ENCODE measurements at regions of chr3 and their contacts with region 1.

Region 1: DNA sequence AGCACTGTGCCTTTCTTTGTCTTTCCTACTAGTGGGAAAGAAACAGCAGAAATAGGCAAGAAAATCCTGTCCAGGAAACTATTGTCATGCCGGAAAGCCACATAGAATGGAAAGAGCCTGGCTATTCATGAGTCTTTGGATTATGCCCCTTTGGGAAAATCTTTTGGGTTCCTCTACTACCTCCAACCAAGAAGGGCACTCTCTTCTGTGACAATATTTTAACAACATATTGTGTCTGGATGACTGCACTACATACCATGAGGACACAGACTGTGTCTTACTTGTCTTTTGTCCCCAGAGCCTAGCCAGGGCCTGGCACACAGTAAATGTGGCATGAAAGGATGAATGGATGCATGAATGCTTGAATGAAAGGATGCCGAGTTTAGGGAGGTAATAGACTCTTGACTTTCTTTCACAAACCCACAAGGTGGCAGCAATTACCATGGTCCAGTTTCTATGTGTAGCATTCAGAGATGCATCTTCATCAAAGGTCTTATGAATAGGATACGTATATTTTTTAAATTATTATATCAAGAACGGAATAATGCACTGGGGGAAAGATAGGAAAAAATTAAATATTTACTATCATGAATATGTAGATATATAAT is 30.3 kb downstream of the ARL14 start:
- DNase-seq: peak in 1 of 2 donors; percentile 24
- ATAC-seq: peak; percentile 88 to 97
- H3K4me3 ChIP-seq: no peak overlapping the region
- H3K27ac ChIP-seq: no peak overlapping the region
- H3K4me1 ChIP-seq: no peaks in the 10 kb centered on the region
- H3K27me3 ChIP-seq: no peaks in the 10 kb centered on the region
- CTCF ChIP-seq: peak; percentile 52 to 70 (median 60)
- POLR2A ChIP-seq: no peak

Region 2: GRCh38 chr3:160929595-160929994 is 222.3 kb after region 1 on chr3:
- in situ Hi-C with region 1: loop called in 2 of 4 experiments (anchors 10 kb)
- intact Hi-C with region 1: no loop called
- DNase-seq: peak; percentile 32 to 43
- ATAC-seq: peak; percentile 59 to 68
- H3K4me3 ChIP-seq: no peak overlapping the region
- H3K27ac ChIP-seq: no peak overlapping the region
- H3K4me1 ChIP-seq: peaks cover 17 to 50% of the 10 kb centered on the region in 2 donors
- H3K27me3 ChIP-seq: no peaks in the 10 kb centered on the region
- CTCF ChIP-seq: peak in 4 of 5 experiments; percentile 20 to 48 (median 36)
- POLR2A ChIP-seq: no peak

Region 3: GRCh38 chr3:160935413-160936095 is 228.3 kb after region 1 on chr3:
- in situ Hi-C with region 1: loop called (anchors 5 to 10 kb)
- intact Hi-C with region 1: no loop called
- DNase-seq: no peak
- ATAC-seq: no peak
- H3K4me3 ChIP-seq: no peak overlapping the region
- H3K27ac ChIP-seq: no peak overlapping the region
- H3K4me1 ChIP-seq: peaks cover 0 to 8% of the 10 kb centered on the region in 2 donors
- H3K27me3 ChIP-seq: no peaks in the 10 kb centered on the region
- CTCF ChIP-seq: no peak
- POLR2A ChIP-seq: no peak

Region 4: DNA sequence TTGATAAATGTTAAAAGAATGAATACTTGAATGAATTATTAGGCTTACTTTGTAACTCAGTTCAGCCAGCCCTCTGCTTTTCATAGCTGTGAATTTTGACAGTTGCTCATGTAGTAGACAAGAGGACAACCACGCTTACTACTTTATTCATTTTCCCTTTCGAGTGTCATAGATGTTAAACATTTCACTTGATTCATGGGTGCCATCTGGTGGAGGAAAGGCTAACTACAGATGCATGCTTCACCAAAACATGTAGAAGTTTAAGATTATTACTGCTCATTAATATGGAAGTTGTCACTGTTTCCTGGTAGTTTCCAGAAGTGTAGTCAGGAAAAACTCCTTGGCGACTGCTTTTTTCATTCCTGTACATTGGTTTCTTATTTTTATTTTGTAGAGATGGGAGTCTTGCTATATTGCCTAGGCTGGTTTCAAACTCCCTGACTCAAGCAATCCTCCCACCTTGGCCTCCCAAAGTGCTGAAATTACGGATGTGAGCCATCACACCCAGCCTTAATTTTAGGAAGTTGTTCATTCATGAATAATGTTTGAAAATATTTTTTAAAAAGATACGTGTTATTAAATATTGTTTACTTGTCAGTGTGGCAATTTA is 234.7 kb after region 1 on chr3:
- in situ Hi-C with region 1: loop called (anchors 5 to 10 kb)
- intact Hi-C with region 1: loop called (anchors 1 kb)
- DNase-seq: peak; percentile 35 to 53
- ATAC-seq: peak; percentile 85 to 90
- H3K4me3 ChIP-seq: no peak overlapping the region
- H3K27ac ChIP-seq: peak overlapping the region in 1 of 4 donors; percentile 15
- H3K4me1 ChIP-seq: peaks cover 4 to 7% of the 10 kb centered on the region in 2 donors
- H3K27me3 ChIP-seq: no peaks in the 10 kb centered on the region
- CTCF ChIP-seq: peak; percentile 84 to 91 (median 86)
- POLR2A ChIP-seq: no peak

Region 5: DNA sequence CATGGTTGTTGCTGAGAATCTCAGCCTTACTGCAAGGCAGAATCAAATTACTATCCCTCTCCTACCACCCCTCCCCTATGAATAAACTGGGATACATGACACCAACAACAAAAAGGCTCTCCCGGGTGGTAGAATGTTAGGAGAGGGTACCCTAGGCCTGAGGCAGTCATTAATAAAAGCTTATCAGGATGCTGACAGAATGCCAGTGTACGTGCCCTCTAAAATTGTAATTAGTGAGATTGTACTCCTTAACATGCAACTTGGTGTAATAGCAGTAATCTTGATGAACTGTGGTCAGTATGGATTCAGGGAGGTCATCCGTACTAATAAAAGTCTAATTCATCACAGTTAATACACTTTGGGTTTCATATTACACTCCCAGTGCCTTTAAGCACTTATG is 321.3 kb after region 1 on chr3:
- in situ Hi-C with region 1: no loop called
- intact Hi-C with region 1: no loop called
- DNase-seq: no peak
- ATAC-seq: no peak
- H3K4me3 ChIP-seq: no peak overlapping the region
- H3K27ac ChIP-seq: no peak overlapping the region
- H3K4me1 ChIP-seq: peaks cover 10 to 15% of the 10 kb centered on the region in 2 donors
- H3K27me3 ChIP-seq: no peaks in the 10 kb centered on the region
- CTCF ChIP-seq: no peak
- POLR2A ChIP-seq: no peak

Region 6: DNA sequence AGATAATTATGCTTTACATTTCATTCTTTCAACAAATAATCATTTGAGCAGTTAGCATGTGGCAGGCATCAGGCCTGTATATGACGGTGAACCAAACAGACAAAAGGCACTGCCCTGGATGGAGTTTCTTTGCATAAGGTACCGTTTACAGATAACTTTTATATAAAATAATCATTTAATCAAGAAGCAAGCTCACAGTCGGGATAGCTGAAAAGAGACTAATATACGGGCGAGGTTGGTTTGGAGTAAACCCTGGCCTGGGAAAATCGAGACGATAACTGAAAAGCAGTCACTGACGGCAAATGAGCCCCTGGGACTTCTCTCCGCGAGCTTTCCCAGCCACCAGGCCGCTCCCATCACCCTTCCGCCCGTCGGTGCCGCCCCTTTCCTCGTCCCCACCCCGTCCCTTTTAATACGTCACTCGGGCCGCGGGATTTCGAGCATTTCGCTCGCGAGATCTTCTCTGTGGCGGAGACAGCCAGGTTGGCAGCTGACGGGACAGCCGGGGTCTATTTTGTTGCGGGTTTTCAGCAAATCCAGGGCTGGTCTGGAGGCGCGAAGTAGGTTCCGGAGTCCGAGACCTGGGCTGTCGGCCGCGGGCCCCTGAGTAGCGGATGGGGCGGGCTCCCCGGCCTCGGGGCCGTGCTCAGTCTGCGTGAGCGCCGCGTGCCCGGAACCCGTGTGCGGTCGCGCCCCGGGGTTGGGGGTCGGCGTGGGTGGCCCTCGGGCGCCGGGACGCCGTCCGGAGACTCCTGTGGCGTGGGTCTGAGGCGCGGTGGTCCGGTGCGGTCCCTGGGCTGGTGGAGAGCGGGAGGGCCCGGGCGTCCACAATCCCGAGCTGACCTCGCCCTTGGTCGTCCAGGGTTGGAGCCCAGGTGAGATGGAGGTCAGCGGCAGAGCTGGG is 513.8 kb after region 1 on chr3 and contains the start of gene NMD3:
- in situ Hi-C with region 1: loop called in 2 of 4 experiments (anchors 25 kb)
- intact Hi-C with region 1: no loop called
- DNase-seq: peak; percentile 90 to 91
- ATAC-seq: peak; percentile 98 to 99
- H3K4me3 ChIP-seq: peak within 1 kb of the TSS; percentile 84 to 95 (median 90)
- H3K27ac ChIP-seq: peak within 1 kb of the TSS; percentile 92 to 95 (median 94)
- H3K4me1 ChIP-seq: peaks cover 19 to 29% of the 10 kb centered on the region in 2 donors
- H3K27me3 ChIP-seq: no peaks in the 10 kb centered on the region
- CTCF ChIP-seq: no peak
- POLR2A ChIP-seq: peak; percentile 83 to 87
- total RNA-seq, gene NMD3: 27.3 to 42.8 (median 37.4) TPM

Region 7: DNA sequence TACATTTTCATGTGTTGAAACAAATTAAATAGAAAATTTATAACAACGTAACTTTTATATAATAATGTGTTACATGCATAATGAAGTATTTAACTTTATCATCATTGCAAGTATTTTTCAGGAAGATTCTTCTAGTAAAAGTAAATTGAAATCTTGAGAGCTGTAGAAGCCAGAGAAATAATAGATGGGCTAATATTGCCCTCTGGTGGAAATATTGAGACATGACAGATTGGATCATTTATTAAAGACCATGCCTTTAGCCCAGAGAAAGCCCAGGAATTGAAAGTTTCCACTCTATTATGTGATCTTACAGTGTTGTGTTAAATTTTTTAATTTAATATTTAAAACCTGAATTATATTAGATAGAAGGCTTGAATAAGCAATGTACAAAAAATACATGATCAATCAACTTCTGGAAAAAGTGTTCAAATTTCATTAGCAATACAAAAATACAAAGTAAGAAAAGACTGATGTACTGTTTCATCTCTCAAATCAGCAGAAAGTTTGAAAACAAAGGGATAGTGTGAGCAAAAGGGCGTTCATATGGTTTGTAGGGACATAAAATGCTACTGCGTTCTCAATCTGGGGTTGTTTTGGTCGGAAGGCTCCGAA is 716.7 kb after region 1 on chr3:
- in situ Hi-C with region 1: loop called in 2 of 4 experiments (anchors 25 kb)
- intact Hi-C with region 1: no loop called
- DNase-seq: no peak
- ATAC-seq: peak; percentile 41 to 69
- H3K4me3 ChIP-seq: no peak overlapping the region
- H3K27ac ChIP-seq: no peak overlapping the region
- H3K4me1 ChIP-seq: no peaks in the 10 kb centered on the region
- H3K27me3 ChIP-seq: no peaks in the 10 kb centered on the region
- CTCF ChIP-seq: peak; percentile 56 to 77 (median 72)
- POLR2A ChIP-seq: no peak